PC-9 (cell line): ENCODE measurements at regions of chr6 and their contacts with region 1.

Region 1: GRCh38 chr6:2988426-2989331 is 11.0 kb upstream of the NQO2 start:
- DNase-seq: peak; percentile 87 to 91
- H3K4me3 ChIP-seq: peak overlapping the region; percentile 83
- H3K27ac ChIP-seq: peak overlapping the region; percentile 99
- H3K4me1 ChIP-seq: peaks cover 49% of the 10 kb centered on the region
- H3K27me3 ChIP-seq: no peaks in the 10 kb centered on the region
- CTCF ChIP-seq: peak; percentile 74

Region 2: GRCh38 chr6:2791124-2791974 is 197.3 kb before region 1 on chr6:
- CTCF ChIA-PET with region 1: interaction called, 8 read pairs
- POLR2A ChIA-PET with region 1: no interaction called
- intact Hi-C with region 1: loop called (anchors 1 kb)
- DNase-seq: peak; percentile 71
- H3K4me3 ChIP-seq: no peak overlapping the region
- H3K27ac ChIP-seq: peak overlapping the region; percentile 74
- H3K4me1 ChIP-seq: peaks cover 4% of the 10 kb centered on the region; the same call in 1 of the 2 replicates
- H3K27me3 ChIP-seq: no peaks in the 10 kb centered on the region
- CTCF ChIP-seq: peak; percentile 80

Region 3: DNA sequence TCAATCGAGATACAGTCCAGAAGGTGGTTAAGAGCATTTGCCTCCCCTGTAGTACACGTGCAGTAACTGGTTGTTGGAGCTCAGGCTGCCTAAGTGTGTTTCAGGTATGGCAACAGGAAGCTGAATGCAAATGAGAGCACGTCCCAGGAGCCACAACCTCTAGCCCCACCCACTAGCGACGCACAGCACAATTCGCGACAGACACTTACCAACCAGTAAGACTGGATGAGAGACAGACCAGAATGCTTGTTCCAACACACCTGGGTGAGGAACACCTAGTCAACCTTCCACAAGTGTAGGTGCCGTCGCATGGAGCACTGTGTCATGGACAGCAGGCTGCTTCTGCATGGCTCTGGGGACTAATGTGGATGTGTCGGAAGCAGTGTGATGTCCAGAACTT is 139.8 kb before region 1 on chr6:
- CTCF ChIA-PET with region 1: interaction called, 10 read pairs
- POLR2A ChIA-PET with region 1: no interaction called
- intact Hi-C with region 1: loop called (anchors 1 kb)
- DNase-seq: no peak
- H3K4me3 ChIP-seq: no peak overlapping the region
- H3K27ac ChIP-seq: no peak overlapping the region
- H3K4me1 ChIP-seq: peaks cover 29% of the 10 kb centered on the region
- H3K27me3 ChIP-seq: no peaks in the 10 kb centered on the region
- CTCF ChIP-seq: no peak

Region 4: DNA sequence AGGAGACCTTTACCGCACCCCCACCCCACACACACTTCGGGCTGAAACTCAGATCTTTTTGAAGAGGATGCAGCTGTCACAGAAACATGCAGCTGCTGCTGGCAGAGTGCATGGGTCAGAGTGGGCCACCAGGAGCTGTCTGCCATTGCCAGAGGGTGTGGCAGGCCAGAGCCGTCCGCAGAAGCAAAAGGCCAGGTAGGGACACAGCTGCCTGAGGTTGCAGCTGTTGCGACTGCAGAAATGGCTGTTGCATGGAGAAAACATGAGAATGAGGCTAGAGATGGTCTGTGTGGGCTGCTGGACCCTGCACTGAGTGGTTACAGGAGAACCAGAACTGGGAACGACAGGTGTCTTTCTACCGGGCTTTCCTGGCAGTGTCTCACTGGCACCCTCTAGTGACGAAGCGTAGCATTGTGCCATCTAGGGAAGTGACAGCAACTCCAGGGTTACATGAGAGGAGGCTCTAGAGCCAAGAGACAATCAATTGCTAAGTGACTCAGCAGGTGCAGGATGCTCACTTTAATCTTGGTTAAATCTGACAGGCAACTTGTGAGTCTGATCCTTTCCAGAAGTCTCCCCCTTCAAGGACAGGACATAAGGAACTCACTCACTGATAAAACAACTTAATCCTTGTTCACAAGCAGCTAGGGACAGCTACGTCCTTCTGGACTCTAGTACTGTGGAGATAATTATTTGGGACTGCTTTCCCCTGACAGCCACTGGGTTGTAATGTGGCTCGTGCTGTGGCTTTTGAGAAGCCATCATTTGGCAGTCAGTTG is 56.5 kb before region 1 on chr6:
- CTCF ChIA-PET with region 1: no interaction called
- POLR2A ChIA-PET with region 1: no interaction called
- intact Hi-C with region 1: loop called (anchors 1 kb)
- DNase-seq: peak; percentile 70 to 84
- H3K4me3 ChIP-seq: no peak overlapping the region
- H3K27ac ChIP-seq: peak overlapping the region; percentile 46
- H3K4me1 ChIP-seq: peaks cover 3% of the 10 kb centered on the region; the same call in 1 of the 2 replicates
- H3K27me3 ChIP-seq: no peaks in the 10 kb centered on the region
- CTCF ChIP-seq: peak; percentile 83

Region 5: GRCh38 chr6:2971420-2972218 is 17.1 kb before region 1 on chr6 and contains the start of gene SERPINB6:
- CTCF ChIA-PET with region 1: no interaction called
- POLR2A ChIA-PET with region 1: interaction called, 4 read pairs
- intact Hi-C with region 1: loop called (anchors 1 kb)
- DNase-seq: peak in 1 of 2 experiments; percentile 76
- H3K4me3 ChIP-seq: peak within 1 kb of the TSS; percentile 80
- H3K27ac ChIP-seq: peak within 1 kb of the TSS; percentile 90
- H3K4me1 ChIP-seq: peaks cover 19% of the 10 kb centered on the region
- H3K27me3 ChIP-seq: no peaks in the 10 kb centered on the region
- CTCF ChIP-seq: no peak; the same call in 1 of the 2 replicates
- total RNA-seq, gene SERPINB6: 169 and 187 TPM in 2 replicates

Region 6: DNA sequence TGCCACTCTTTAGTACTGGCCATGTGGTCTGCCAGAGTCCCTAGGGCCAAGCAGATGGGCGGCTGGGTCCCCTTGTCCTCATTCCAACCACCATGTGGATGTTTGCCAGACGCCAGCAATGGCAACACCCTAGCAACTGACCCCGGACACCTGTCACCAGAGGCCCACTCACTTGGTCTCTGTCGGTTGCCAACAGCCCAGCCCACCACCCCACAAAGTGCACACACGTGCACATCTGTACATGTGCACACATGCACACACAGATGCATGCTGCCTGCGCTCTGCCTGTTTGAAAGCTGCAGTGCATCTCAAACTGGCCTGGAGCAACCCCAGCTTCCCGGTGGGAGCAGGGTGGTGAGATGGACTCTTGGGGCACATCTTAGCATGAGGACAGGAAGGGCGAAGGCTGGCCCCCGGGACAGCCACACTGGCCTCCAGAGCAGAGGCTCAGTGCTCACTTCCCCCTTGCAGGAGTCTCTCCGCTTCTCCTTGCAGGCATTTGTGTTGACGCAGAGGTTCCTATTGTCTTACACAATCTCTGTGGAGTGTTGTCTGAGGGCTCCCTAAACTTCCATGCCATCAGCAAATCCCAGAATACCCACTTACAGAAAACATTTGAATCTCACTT is 324.0 kb after region 1 on chr6:
- CTCF ChIA-PET with region 1: no interaction called
- POLR2A ChIA-PET with region 1: no interaction called
- intact Hi-C with region 1: no loop called
- DNase-seq: no peak
- H3K4me3 ChIP-seq: no peak overlapping the region
- H3K27ac ChIP-seq: no peak overlapping the region
- H3K4me1 ChIP-seq: no peaks in the 10 kb centered on the region
- H3K27me3 ChIP-seq: no peaks in the 10 kb centered on the region
- CTCF ChIP-seq: no peak

Region 7: DNA sequence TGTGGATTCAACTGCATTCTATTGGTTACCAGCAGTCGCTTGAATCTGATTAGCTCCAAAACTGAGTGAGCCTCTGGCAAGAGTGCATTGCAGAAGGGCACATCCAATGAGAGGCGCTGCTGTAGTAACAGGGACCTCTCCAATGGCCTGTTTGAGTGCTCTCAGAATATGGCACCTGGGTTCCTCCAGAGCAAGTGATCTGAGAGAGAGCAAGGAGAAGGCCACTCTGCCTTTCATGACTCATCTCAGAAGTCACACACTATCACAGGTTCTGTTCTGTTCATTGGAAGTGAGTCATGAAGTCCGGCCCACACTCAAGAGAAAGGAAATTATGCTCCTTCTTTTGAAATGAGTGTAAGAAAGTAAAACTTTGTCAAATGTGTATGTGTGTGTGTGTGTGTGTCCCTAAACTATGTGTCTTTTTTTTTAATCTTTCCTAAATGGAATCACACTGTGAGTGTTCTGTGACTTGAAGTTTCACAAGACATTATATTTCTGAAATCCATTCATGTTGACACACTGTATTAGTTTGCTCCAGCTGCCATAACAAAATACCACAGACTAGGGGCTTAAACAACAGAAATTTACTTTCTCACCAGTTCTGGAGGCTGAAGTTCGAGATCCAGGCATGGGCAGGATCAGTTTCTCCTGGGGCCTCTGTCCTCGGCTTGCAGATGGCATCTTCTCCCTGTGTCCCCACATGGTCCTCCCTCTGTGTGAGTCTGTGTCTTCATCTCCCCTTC is 1649.2 kb after region 1 on chr6:
- CTCF ChIA-PET with region 1: no interaction called
- POLR2A ChIA-PET with region 1: no interaction called
- intact Hi-C with region 1: no loop called
- DNase-seq: no peak
- H3K4me3 ChIP-seq: no peak overlapping the region
- H3K27ac ChIP-seq: no peak overlapping the region
- H3K4me1 ChIP-seq: 0 out of 2 replicates have a peak, but pooled peaks cover 6% of the 10 kb centered on the region
- H3K27me3 ChIP-seq: no peaks in the 10 kb centered on the region
- CTCF ChIP-seq: no peak